ENCODE measurements at regions of chr2 and their contacts with region 1.

Region 1: DNA sequence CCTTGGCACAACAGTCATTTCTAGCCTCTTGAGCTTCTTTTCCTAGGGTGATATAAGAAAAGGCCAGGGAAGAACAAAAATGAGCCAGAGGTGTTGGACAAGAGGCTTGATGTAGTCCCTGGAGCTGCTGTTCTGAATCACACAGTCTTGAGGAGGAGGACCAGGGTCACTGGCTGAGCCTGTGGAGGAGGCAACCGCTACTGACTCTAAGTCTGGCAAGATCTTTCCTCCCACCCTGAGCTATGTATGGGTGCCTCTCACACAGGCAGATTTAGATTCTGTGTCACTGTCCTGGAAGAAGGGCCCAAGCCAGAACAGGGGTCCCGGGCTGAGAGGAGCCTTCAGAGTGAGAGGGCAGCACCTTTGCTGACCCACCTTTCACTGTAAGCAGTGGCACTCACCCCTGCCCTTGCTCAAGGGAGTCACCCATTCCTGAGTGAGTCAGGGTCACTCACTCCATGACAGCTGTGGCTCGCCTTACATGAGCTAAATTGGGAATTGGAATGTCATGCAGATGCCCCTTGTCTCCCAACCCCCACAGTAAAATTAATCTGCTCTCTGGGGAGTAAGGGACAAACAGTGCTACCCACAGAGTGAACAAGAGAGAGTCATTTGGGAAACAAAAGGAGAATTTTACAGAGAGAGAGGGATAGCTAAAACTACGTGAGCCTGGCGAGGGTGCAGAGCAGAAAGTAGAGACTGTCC is at the start of gene TRIM54:
- DNase-seq: no peak
- H3K4me3 ChIP-seq: no peak within 1 kb of the TSS
- H3K4me3 Mint-ChIP-seq: no peak within 1 kb of the TSS
- H3K27ac ChIP-seq: no peak within 1 kb of the TSS
- H3K27ac Mint-ChIP-seq: peak within 1 kb of the TSS in 1 of 8 donors; percentile 36
- H3K4me1 ChIP-seq: no peaks in the 10 kb centered on the region
- H3K4me1 Mint-ChIP-seq: peaks cover 2 to 5% (median 4%) of the 10 kb centered on the region in 3 donors
- H3K27me3 ChIP-seq: no peaks in the 10 kb centered on the region
- H3K27me3 Mint-ChIP-seq: peaks cover 20 to 65% of the 10 kb centered on the region in 2 donors
- total RNA-seq, gene TRIM54: 0.22 TPM

Region 2: GRCh38 chr2:26959331-26959730 is 322.7 kb before region 1 on chr2:
- CTCF ChIA-PET with region 1: interaction called, 84 read pairs
- POLR2A ChIA-PET with region 1: no interaction called
- DNase-seq: no peak
- H3K4me3 ChIP-seq: no peak overlapping the region
- H3K4me3 Mint-ChIP-seq: no peak overlapping the region
- H3K27ac ChIP-seq: no peak overlapping the region
- H3K27ac Mint-ChIP-seq: no peak overlapping the region
- H3K4me1 ChIP-seq: no peaks in the 10 kb centered on the region
- H3K4me1 Mint-ChIP-seq: peaks cover 0 to 3% (median 0%) of the 10 kb centered on the region in 3 donors
- H3K27me3 ChIP-seq: peaks cover 4% of the 10 kb centered on the region
- H3K27me3 Mint-ChIP-seq: peaks cover 30 to 55% of the 10 kb centered on the region in 2 donors

Region 3: GRCh38 chr2:27102329-27102728 is 179.7 kb before region 1 on chr2:
- CTCF ChIA-PET with region 1: interaction called, 42 read pairs
- POLR2A ChIA-PET with region 1: no interaction called
- DNase-seq: no peak
- H3K4me3 ChIP-seq: no peak overlapping the region
- H3K4me3 Mint-ChIP-seq: no peak overlapping the region
- H3K27ac ChIP-seq: no peak overlapping the region
- H3K27ac Mint-ChIP-seq: no peak overlapping the region
- H3K4me1 ChIP-seq: no peaks in the 10 kb centered on the region
- H3K4me1 Mint-ChIP-seq: no peaks in the 10 kb centered on the region
- H3K27me3 ChIP-seq: peaks cover 4% of the 10 kb centered on the region
- H3K27me3 Mint-ChIP-seq: peaks cover 6 to 26% of the 10 kb centered on the region in 2 donors

Region 4: GRCh38 chr2:27126252-27126710 is 155.7 kb before region 1 on chr2:
- CTCF ChIA-PET with region 1: no interaction called
- POLR2A ChIA-PET with region 1: no interaction called
- DNase-seq: no peak
- H3K4me3 ChIP-seq: no peak overlapping the region
- H3K4me3 Mint-ChIP-seq: peak overlapping the region in 1 of 7 donors; percentile 50
- H3K27ac ChIP-seq: no peak overlapping the region
- H3K27ac Mint-ChIP-seq: peak overlapping the region in 1 of 8 donors; percentile 20
- H3K4me1 ChIP-seq: peaks cover 13% of the 10 kb centered on the region
- H3K4me1 Mint-ChIP-seq: peaks cover 15 to 19% (median 15%) of the 10 kb centered on the region in 3 donors
- H3K27me3 ChIP-seq: no peaks in the 10 kb centered on the region
- H3K27me3 Mint-ChIP-seq: peaks cover 0 to 1% of the 10 kb centered on the region in 2 donors

Region 5: GRCh38 chr2:27264753-27265535 is 17.1 kb before region 1 on chr2:
- CTCF ChIA-PET with region 1: interaction called, 42 read pairs
- POLR2A ChIA-PET with region 1: interaction called, 3 read pairs
- DNase-seq: peak; percentile 37 to 72 (median 58)
- H3K4me3 ChIP-seq: peak overlapping the region; percentile 59
- H3K4me3 Mint-ChIP-seq: peak overlapping the region; percentile 71 to 95 (median 85)
- H3K27ac ChIP-seq: no peak overlapping the region
- H3K27ac Mint-ChIP-seq: peak overlapping the region in 2 of 8 donors; percentile 19 to 44
- H3K4me1 ChIP-seq: peaks cover 19% of the 10 kb centered on the region
- H3K4me1 Mint-ChIP-seq: peaks cover 25 to 36% (median 31%) of the 10 kb centered on the region in 3 donors
- H3K27me3 ChIP-seq: peaks cover 32% of the 10 kb centered on the region
- H3K27me3 Mint-ChIP-seq: peaks cover 30 to 44% of the 10 kb centered on the region in 2 donors

Region 6: GRCh38 chr2:27271631-27272340 is 10.2 kb before region 1 on chr2:
- CTCF ChIA-PET with region 1: interaction called, 42 read pairs
- POLR2A ChIA-PET with region 1: interaction called, 3 read pairs
- DNase-seq: no peak
- H3K4me3 ChIP-seq: no peak overlapping the region
- H3K4me3 Mint-ChIP-seq: no peak overlapping the region
- H3K27ac ChIP-seq: no peak overlapping the region
- H3K27ac Mint-ChIP-seq: no peak overlapping the region
- H3K4me1 ChIP-seq: no peaks in the 10 kb centered on the region
- H3K4me1 Mint-ChIP-seq: no peaks in the 10 kb centered on the region
- H3K27me3 ChIP-seq: no peaks in the 10 kb centered on the region
- H3K27me3 Mint-ChIP-seq: peaks cover 10 to 27% of the 10 kb centered on the region in 2 donors